Activated naive CD4-positive, alpha-beta T cell treated with anti-CD3 and anti-CD28 coated beads for 36 hours (primary cell): ENCODE measurements at regions of chr2 and their contacts with region 1.

Region 1: DNA sequence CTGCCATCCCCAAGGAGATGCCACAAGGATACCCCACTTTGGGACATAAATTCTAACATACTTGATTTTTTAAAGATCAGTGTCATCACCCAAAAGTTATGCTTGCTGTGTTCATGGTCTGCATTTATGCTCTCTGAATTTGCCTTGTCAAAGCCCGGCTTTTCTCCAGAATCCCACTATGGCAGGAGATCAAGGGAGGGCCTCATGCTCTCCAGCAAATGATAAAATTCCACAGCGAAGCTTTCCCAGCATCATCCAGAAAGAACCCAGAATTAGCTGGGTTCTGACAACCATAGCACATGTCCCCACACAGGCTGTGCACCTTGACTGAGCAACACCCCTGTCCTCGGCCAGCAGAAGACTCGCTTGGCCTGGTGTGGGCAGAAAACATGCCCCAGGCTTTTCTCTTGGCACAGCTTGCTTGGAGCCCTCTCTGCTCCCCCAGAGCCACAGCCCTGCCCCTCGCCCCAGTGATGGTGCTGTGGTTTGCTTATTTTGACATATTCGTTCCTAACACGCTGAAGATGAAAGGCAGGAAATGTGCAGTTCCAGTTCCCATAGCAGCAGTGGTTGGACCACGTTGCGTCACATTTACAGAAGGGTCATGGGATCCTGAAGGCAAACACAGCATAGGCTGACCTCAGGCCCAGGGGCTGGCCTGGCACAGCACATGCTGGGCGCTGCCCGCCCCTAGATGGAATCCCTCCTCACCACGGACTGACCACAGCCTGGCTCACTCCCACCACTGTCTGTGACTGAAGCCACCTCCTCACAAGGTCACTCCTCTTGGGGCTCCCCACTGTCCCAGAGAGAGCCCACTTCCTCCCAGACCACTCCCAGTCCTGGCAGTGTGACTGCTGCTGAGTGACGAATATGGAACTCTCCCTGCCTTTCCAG is 14.1 kb upstream of the CHRNA1 start:
- DNase-seq: peak; percentile 92
- H3K4me3 Mint-ChIP-seq: no peak overlapping the region
- H3K27ac Mint-ChIP-seq: peak overlapping the region; percentile 70
- H3K4me1 Mint-ChIP-seq: peaks cover 45% of the 10 kb centered on the region
- H3K27me3 Mint-ChIP-seq: no peaks in the 10 kb centered on the region

Region 2: DNA sequence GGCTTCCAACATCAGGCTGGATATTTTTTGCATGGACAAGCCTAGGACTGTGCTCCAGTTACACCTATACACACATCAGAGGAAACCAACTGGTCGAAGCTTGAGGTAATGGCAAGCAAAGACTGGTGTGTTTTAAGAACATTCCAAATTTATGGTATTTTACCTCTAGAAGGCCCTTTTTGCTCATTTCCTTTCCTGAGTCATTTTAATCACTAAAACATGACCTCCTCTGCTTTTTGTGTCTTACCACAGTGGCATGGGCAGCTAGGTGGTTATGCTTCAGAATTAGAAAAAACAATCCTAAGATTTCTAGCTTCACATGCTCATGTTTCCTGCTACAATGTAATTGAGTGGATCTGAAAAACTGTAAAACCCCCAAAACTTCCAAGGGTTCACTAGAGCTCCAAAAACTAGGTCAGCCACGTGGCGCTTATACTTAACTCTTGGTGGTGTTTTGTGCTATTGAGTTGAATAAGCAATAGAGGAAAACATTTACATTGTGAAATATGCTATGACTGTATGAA is 16.6 kb after region 1 on chr2:
- CTCF ChIA-PET with region 1: interaction called, 3 read pairs
- intact Hi-C with region 1: loop called (anchors 2 kb)
- DNase-seq: peak; percentile 34
- H3K4me3 Mint-ChIP-seq: no peak overlapping the region
- H3K27ac Mint-ChIP-seq: no peak overlapping the region
- H3K4me1 Mint-ChIP-seq: peaks cover 19% of the 10 kb centered on the region
- H3K27me3 Mint-ChIP-seq: peaks cover 4% of the 10 kb centered on the region

Region 3: DNA sequence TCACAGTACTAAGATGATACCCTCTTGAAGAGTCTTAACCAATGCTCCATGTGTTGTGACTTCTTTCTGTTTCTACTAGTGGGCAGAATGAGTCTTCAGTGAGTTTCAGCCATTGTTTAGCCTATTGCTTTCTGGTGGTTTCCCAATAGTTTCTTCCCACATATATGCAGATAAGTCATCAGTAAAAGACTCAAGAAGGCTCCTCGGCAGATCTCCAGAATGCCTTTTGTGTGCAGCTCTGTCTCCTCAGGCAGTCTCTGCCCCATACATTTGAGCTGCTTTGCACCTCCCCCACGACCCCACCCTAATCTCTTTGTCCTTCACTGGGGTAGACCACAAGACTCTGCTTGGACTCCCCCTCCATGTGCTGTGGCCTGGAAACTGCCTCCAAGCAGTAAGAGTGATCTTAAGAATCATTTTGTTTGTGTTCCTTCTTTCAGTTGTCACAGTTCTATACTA is 57.5 kb after region 1 on chr2:
- CTCF ChIA-PET with region 1: interaction called, 3 read pairs
- intact Hi-C with region 1: loop called (anchors 1 kb)
- DNase-seq: peak; percentile 38
- H3K4me3 Mint-ChIP-seq: peak overlapping the region; percentile 36
- H3K27ac Mint-ChIP-seq: peak overlapping the region; percentile 71
- H3K4me1 Mint-ChIP-seq: peaks cover 32% of the 10 kb centered on the region
- H3K27me3 Mint-ChIP-seq: no peaks in the 10 kb centered on the region

Region 4: GRCh38 chr2:175181104-175181876 is 403.0 kb after region 1 on chr2 and contains the start of gene ATP5MC3:
- CTCF ChIA-PET with region 1: no interaction called
- intact Hi-C with region 1: loop called (anchors 2 kb)
- DNase-seq: peak; percentile 95
- H3K4me3 Mint-ChIP-seq: peak within 1 kb of the TSS; percentile 94
- H3K27ac Mint-ChIP-seq: peak within 1 kb of the TSS; percentile 85
- H3K4me1 Mint-ChIP-seq: peaks cover 29% of the 10 kb centered on the region
- H3K27me3 Mint-ChIP-seq: no peaks in the 10 kb centered on the region
- total RNA-seq, gene ATP5MC3: 308 to 310 TPM